Activated CD4-positive, alpha-beta T cell treated with anti-CD3 and anti-CD28 coated beads for 36 hours (primary cell): ENCODE measurements at regions of chr19 and their contacts with region 1.

Region 1: DNA sequence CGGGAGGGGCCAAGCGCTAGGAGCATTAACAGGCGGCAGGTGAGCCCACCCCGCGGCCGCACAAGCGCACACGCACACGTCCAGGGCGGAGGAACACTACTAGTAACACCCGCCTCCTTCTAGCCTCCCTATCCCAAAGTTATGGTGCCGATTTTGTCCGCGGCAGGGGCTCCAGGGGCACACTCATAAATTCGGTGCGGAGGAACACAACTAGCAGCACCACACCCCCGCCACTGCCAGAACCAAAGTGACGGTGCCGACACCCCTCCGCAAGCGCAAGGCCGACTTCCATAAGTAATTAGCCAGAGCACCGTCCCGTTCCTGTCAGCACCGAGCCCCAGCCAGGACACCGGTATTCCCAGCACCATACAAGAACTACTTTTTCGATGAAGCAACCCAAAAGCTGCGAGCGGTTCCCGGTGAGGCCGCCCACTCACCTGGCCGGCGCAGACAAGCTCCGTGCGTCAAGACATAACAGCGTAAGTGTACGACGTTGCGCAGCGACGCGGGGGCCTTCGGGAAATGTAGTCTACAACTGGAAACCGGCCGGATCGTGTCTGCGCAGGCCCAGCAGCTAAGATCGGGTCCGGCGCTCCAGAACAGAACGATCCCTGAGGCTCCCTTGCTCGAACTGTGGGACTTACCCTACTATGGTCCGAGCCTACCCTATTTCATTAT is at the starts of genes ZNF540 and ZNF571:
- DNase-seq: peak; percentile 97
- ATAC-seq: peak; percentile 97
- H3K4me3 Mint-ChIP-seq: peak within 1 kb of the TSS; percentile 94
- H3K27ac Mint-ChIP-seq: peak within 1 kb of the TSS; percentile 99
- H3K4me1 Mint-ChIP-seq: peaks cover 27% of the 10 kb centered on the region
- H3K27me3 Mint-ChIP-seq: no peaks in the 10 kb centered on the region
- total RNA-seq, gene ZNF540: 0.67 to 1.1 TPM
- total RNA-seq, gene ZNF571: 2.4 to 2.9 TPM

Region 2: GRCh38 chr19:36837906-36838783 is 756.3 kb before region 1 on chr19 and contains the start of gene ZNF790:
- CTCF ChIA-PET with region 1: no interaction called
- POLR2A ChIA-PET with region 1: no interaction called
- intact Hi-C with region 1: loop called in 1 of 2 experiments (anchors 5 kb)
- DNase-seq: peak; percentile 92
- ATAC-seq: peak; percentile 97
- H3K4me3 Mint-ChIP-seq: no peak within 1 kb of the TSS
- H3K27ac Mint-ChIP-seq: peak within 1 kb of the TSS; percentile 72
- H3K4me1 Mint-ChIP-seq: peaks cover 2% of the 10 kb centered on the region
- H3K27me3 Mint-ChIP-seq: no peaks in the 10 kb centered on the region
- total RNA-seq, gene ZNF790: 7.1 to 8.8 TPM

Region 3: GRCh38 chr19:37309834-37310575 is 284.4 kb before region 1 on chr19:
- CTCF ChIA-PET with region 1: no interaction called
- POLR2A ChIA-PET with region 1: no interaction called
- intact Hi-C with region 1: loop called in 1 of 2 experiments (anchors 10 kb)
- DNase-seq: peak; percentile 56
- ATAC-seq: no peak
- H3K4me3 Mint-ChIP-seq: no peak overlapping the region
- H3K27ac Mint-ChIP-seq: no peak overlapping the region
- H3K4me1 Mint-ChIP-seq: peaks cover 17% of the 10 kb centered on the region
- H3K27me3 Mint-ChIP-seq: no peaks in the 10 kb centered on the region

Region 4: GRCh38 chr19:37506387-37507166 is 87.9 kb before region 1 on chr19 and contains the start of gene ZNF793:
- CTCF ChIA-PET with region 1: no interaction called
- POLR2A ChIA-PET with region 1: interaction called, 6 read pairs
- intact Hi-C with region 1: loop called in 1 of 2 experiments (anchors 1 kb)
- DNase-seq: peak; percentile 87
- ATAC-seq: peak; percentile 87
- H3K4me3 Mint-ChIP-seq: no peak within 1 kb of the TSS
- H3K27ac Mint-ChIP-seq: no peak within 1 kb of the TSS
- H3K4me1 Mint-ChIP-seq: no peaks in the 10 kb centered on the region
- H3K27me3 Mint-ChIP-seq: no peaks in the 10 kb centered on the region
- total RNA-seq, gene ZNF793: 4.4 to 4.7 TPM

Region 5: GRCh38 chr19:37635076-37636056 is 40.9 kb after region 1 on chr19:
- CTCF ChIA-PET with region 1: no interaction called
- POLR2A ChIA-PET with region 1: no interaction called
- intact Hi-C with region 1: no loop called
- DNase-seq: no peak
- ATAC-seq: no peak
- H3K4me3 Mint-ChIP-seq: no peak overlapping the region
- H3K27ac Mint-ChIP-seq: no peak overlapping the region
- H3K4me1 Mint-ChIP-seq: no peaks in the 10 kb centered on the region
- H3K27me3 Mint-ChIP-seq: no peaks in the 10 kb centered on the region

Region 6: GRCh38 chr19:37655689-37656371 is 61.4 kb after region 1 on chr19:
- CTCF ChIA-PET with region 1: no interaction called
- POLR2A ChIA-PET with region 1: interaction called, 3 read pairs
- intact Hi-C with region 1: loop called (anchors 1 kb)
- DNase-seq: peak; percentile 93
- ATAC-seq: peak; percentile 79
- H3K4me3 Mint-ChIP-seq: peak overlapping the region; percentile 94
- H3K27ac Mint-ChIP-seq: peak overlapping the region; percentile 99
- H3K4me1 Mint-ChIP-seq: peaks cover 33% of the 10 kb centered on the region
- H3K27me3 Mint-ChIP-seq: no peaks in the 10 kb centered on the region

Region 7: GRCh38 chr19:37719111-37719926 is 124.9 kb after region 1 on chr19 and contains the start of gene ZNF607:
- CTCF ChIA-PET with region 1: no interaction called
- POLR2A ChIA-PET with region 1: interaction called, 3 read pairs
- intact Hi-C with region 1: loop called in 1 of 2 experiments (anchors 1 kb)
- DNase-seq: peak; percentile 94
- ATAC-seq: peak; percentile 96
- H3K4me3 Mint-ChIP-seq: peak within 1 kb of the TSS; percentile 88
- H3K27ac Mint-ChIP-seq: peak within 1 kb of the TSS; percentile 89
- H3K4me1 Mint-ChIP-seq: peaks cover 19% of the 10 kb centered on the region
- H3K27me3 Mint-ChIP-seq: no peaks in the 10 kb centered on the region
- total RNA-seq, gene ZNF607: 4.9 to 8.3 TPM